MCF 10A (cell line): ENCODE measurements at regions of chr15 and their contacts with region 1.

Region 1: DNA sequence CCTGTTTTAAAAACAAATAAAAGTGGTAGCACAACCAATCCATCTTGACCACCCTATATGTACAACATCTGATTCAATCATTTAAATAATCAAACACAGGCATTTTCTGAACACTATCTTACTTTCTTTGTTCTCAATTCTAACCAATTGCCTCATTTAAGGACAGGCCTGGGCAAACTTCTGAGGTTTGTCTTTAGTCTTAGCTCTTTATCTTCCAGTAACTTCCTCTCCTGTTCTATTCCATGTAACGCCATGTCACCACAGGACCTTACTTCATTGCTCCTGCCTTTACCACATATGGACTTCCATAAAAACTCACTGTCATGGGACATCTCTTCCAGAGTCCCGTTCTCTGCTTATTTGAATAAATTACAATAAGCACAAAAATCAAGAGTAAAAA is 14.9 kb downstream of the HDGFL3 start:
- DNase-seq: no peak
- H3K4me3 Mint-ChIP-seq: no peak overlapping the region
- H3K27ac Mint-ChIP-seq: no peak overlapping the region
- H3K4me1 Mint-ChIP-seq: peaks cover 34% of the 10 kb centered on the region
- H3K27me3 Mint-ChIP-seq: no peaks in the 10 kb centered on the region
- CTCF ChIP-seq: no peak

Region 2: DNA sequence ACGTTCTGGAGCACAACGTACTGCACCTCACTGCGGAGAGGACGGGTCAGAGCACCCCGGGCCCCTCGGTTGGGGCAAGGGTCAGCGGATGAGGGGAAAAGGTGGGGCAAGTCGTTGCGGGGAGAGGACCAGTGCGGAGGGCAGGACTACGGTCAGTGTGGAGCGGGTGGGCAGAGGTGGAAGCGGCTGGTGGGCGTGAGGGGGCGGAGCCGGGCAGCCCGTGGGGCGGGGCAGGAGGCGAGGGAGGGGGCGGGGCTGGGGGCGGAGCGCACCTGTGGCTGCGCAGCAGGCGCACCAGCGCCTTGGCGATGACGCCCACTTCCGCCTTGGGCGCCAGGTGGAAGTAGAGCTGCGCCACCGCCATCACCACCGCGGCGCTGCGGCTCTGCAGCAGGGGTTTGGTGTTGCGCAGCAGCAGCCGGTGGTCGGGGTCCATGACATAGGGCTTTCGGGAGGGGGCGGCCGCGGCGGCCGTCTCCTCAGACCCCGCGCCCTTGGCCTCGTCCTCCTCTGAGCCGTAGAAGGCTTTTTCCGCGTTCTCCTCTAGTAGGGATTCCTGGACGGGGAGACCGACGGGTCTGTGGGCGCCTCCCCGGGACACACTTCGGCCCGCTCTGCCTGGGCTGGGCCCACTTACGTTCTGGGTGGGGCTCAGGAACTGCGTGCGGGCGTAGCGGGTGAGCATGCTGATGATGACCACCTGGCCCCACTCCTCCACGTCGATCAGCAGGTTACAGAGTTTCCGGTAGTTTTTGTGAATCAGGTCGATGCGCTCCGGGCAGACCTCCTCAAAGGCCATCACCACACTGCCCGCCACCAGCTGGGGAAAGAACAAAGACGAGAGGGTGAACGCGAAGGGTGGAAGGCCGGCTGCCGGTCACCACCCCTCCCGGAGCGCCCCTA is 512.3 kb before region 1 on chr15:
- CTCF ChIA-PET with region 1: no interaction called
- POLR2A ChIA-PET with region 1: no interaction called
- intact Hi-C with region 1: no loop called
- DNase-seq: peak; percentile 58
- H3K4me3 Mint-ChIP-seq: peak overlapping the region; percentile 77
- H3K27ac Mint-ChIP-seq: peak overlapping the region; percentile 80
- H3K4me1 Mint-ChIP-seq: no peaks in the 10 kb centered on the region
- H3K27me3 Mint-ChIP-seq: peaks cover 14% of the 10 kb centered on the region
- CTCF ChIP-seq: peak; percentile 18

Region 3: GRCh38 chr15:83207622-83208411 is 15.1 kb after region 1 on chr15 and contains the start of gene HDGFL3:
- CTCF ChIA-PET with region 1: interaction called, 5 read pairs
- POLR2A ChIA-PET with region 1: interaction called, 54 read pairs
- intact Hi-C with region 1: no loop called
- DNase-seq: peak; percentile 60
- H3K4me3 Mint-ChIP-seq: no peak within 1 kb of the TSS
- H3K27ac Mint-ChIP-seq: peak within 1 kb of the TSS; percentile 91
- H3K4me1 Mint-ChIP-seq: peaks cover 32% of the 10 kb centered on the region
- H3K27me3 Mint-ChIP-seq: no peaks in the 10 kb centered on the region
- CTCF ChIP-seq: peak; percentile 19
- total RNA-seq, gene HDGFL3: 80.4 and 104 TPM in 2 replicates